CD14-positive monocyte (primary cell): ENCODE measurements at regions of chr2 and their contacts with region 1.

Region 1: DNA sequence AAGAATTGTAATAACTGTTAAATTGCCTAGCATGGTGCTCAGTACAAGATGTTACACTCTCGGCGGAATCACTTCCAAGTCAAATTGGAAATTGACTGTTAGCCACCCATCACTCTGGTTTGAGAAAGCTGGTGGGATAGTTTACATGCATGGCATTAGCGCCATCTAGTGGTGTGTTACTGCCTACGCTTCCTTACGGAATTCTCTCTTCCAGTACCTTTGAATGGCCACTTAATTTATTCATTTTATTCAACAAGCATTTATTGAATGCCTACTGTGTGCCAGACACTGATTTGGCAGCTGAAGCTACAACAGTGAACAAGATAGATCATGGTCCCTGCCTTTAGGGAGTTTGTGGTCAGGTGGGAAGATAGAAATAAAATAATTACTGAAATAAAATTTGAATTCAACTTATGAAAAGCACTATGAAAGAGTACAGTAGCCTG is 171.2 kb downstream of the TMEM247 start:
- DNase-seq: peak; percentile 70 to 88 (median 77)
- H3K4me3 ChIP-seq: no peak overlapping the region
- H3K4me3 Mint-ChIP-seq: no peak overlapping the region
- H3K27ac ChIP-seq: no peak overlapping the region
- H3K27ac Mint-ChIP-seq: no peak overlapping the region
- H3K4me1 ChIP-seq: no peaks in the 10 kb centered on the region
- H3K4me1 Mint-ChIP-seq: no peaks in the 10 kb centered on the region
- H3K27me3 ChIP-seq: no peaks in the 10 kb centered on the region
- H3K27me3 Mint-ChIP-seq: peaks cover 0 to 5% (median 4%) of the 10 kb centered on the region in 3 donors
- CTCF ChIP-seq: peak; percentile 92

Region 2: GRCh38 chr2:45993476-45993991 is 657.0 kb before region 1 on chr2:
- intact Hi-C with region 1: loop called (anchors 5 to 10 kb)
- DNase-seq: peak; percentile 51 to 65 (median 62)
- H3K4me3 ChIP-seq: no peak overlapping the region
- H3K4me3 Mint-ChIP-seq: no peak overlapping the region
- H3K27ac ChIP-seq: no peak overlapping the region
- H3K27ac Mint-ChIP-seq: peak overlapping the region in 1 of 7 donors; percentile 15
- H3K4me1 ChIP-seq: peaks cover 0 to 7% of the 10 kb centered on the region in 2 donors
- H3K4me1 Mint-ChIP-seq: peaks cover 14% of the 10 kb centered on the region
- H3K27me3 ChIP-seq: no peaks in the 10 kb centered on the region
- H3K27me3 Mint-ChIP-seq: no peaks in the 10 kb centered on the region
- CTCF ChIP-seq: peak; percentile 80

Region 3: DNA sequence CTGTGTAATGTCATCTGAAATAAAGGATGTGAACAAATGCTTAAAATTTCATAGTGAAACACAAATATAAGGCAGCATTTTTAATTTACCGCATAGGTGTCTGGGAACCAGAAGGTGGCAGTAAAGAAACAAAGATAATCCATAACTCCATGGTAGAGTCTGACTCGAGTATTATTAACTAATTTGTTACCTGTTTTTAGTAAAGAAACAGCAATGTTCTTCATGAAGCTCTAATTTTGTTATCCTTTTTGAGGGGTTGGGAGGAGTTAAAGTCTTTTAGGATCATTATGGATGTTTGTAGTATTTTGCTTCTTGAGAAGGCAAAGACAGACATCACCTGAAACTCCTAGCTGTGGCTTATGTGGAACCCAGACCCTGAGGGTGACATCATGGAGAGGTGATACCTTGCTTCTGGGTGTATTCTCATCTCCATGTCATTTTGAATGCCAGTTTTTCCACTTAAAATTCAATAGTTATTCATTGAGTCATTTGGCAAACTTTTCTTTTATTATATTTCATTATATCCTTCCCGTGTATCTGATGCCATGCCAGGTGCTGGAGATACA is 639.6 kb before region 1 on chr2:
- intact Hi-C with region 1: loop called in 1 of 2 experiments (anchors 10 kb)
- DNase-seq: peak in 2 of 3 donors; percentile 11 to 24
- H3K4me3 ChIP-seq: no peak overlapping the region
- H3K4me3 Mint-ChIP-seq: no peak overlapping the region
- H3K27ac ChIP-seq: no peak overlapping the region
- H3K27ac Mint-ChIP-seq: peak overlapping the region in 1 of 7 donors; percentile 36
- H3K4me1 ChIP-seq: no peaks in the 10 kb centered on the region
- H3K4me1 Mint-ChIP-seq: no peaks in the 10 kb centered on the region
- H3K27me3 ChIP-seq: no peaks in the 10 kb centered on the region
- H3K27me3 Mint-ChIP-seq: no peaks in the 10 kb centered on the region
- CTCF ChIP-seq: peak; percentile 57

Region 4: GRCh38 chr2:47512581-47513083 is 862.1 kb after region 1 on chr2:
- intact Hi-C with region 1: no loop called
- DNase-seq: no peak
- H3K4me3 ChIP-seq: no peak overlapping the region
- H3K4me3 Mint-ChIP-seq: no peak overlapping the region
- H3K27ac ChIP-seq: no peak overlapping the region
- H3K27ac Mint-ChIP-seq: no peak overlapping the region
- H3K4me1 ChIP-seq: no peaks in the 10 kb centered on the region
- H3K4me1 Mint-ChIP-seq: peaks cover 4% of the 10 kb centered on the region
- H3K27me3 ChIP-seq: no peaks in the 10 kb centered on the region
- H3K27me3 Mint-ChIP-seq: peaks cover 2% of the 10 kb centered on the region in 3 donors
- CTCF ChIP-seq: no peak